SK-N-SH (cell line): ENCODE measurements at regions of chr2 and their contacts with region 1.

Region 1: GRCh38 chr2:102240640-102241370 is 54.0 kb downstream of the IL1RL2 start:
- DNase-seq: peak; percentile 78
- H3K4me3 ChIP-seq: peak overlapping the region in 1 of 2 experiments; percentile 40; a peak in 1 of 4 replicates
- H3K27ac ChIP-seq: peak overlapping the region in 1 of 2 experiments; percentile 78; a peak in 2 of 4 replicates
- H3K4me1 ChIP-seq: peaks cover 4 to 9% of the 10 kb centered on the region in 2 experiments; a peak in 2 of 4 replicates
- H3K27me3 ChIP-seq: no peaks in the 10 kb centered on the region
- CTCF ChIP-seq: peak; percentile 97
- EP300 ChIP-seq: no peak
- RAD21 ChIP-seq: peak; percentile 87

Region 2: GRCh38 chr2:102013206-102014040 is 227.4 kb before region 1 on chr2:
- CTCF ChIA-PET with region 1: interaction called, 41 read pairs
- POLR2A ChIA-PET with region 1: no interaction called
- DNase-seq: no peak
- H3K4me3 ChIP-seq: no peak overlapping the region
- H3K27ac ChIP-seq: no peak overlapping the region
- H3K4me1 ChIP-seq: no peaks in the 10 kb centered on the region
- H3K27me3 ChIP-seq: no peaks in the 10 kb centered on the region
- CTCF ChIP-seq: no peak
- EP300 ChIP-seq: no peak
- RAD21 ChIP-seq: no peak

Region 3: GRCh38 chr2:102033031-102033749 is 207.6 kb before region 1 on chr2:
- CTCF ChIA-PET with region 1: interaction called, 16 read pairs
- POLR2A ChIA-PET with region 1: no interaction called
- DNase-seq: no peak
- H3K4me3 ChIP-seq: no peak overlapping the region
- H3K27ac ChIP-seq: peak overlapping the region in 1 of 2 experiments; percentile 8; a peak in 1 of 4 replicates
- H3K4me1 ChIP-seq: peaks cover 0 to 12% of the 10 kb centered on the region in 2 experiments; a peak in 2 of 4 replicates
- H3K27me3 ChIP-seq: no peaks in the 10 kb centered on the region
- CTCF ChIP-seq: no peak
- EP300 ChIP-seq: no peak
- RAD21 ChIP-seq: no peak

Region 4: DNA sequence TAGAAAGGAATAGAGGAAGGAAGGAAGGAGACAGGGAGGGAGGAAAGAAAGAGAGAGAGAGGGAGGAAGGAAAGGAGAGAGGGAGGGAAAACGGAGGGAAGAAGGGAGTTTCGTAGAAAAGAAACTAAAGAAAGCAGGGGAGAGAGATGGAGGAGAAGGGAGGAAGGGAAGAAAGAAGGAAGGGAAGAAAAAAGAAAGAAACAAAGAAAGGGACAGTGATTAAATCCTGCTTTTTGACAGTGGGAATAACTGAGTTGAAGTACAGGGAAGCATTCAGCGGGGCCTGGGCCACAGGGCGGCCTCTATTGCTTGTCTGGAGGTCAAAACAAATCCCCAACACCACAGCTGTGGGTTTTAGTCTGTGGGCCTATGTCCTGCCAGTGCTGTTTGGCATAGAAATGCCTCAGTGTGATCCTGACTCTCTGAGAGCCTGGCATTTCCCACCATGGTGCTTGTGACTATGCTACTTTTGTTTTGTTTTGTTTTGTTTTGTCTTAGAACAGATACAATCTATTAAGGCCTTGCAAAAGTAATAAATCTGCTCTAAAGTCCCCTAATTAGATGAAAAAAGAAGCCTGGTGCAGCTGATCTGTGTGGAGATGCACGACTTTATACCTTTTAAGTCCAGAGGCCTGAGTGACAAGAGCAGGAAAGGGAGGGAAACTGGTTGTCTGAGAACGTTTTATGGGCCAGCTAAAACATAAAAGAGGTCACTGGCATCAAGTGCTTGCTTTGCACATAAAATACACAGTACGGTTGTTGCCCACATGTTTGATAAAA is 14.0 kb before region 1 on chr2:
- CTCF ChIA-PET with region 1: interaction called, 14 read pairs
- POLR2A ChIA-PET with region 1: no interaction called
- DNase-seq: no peak
- H3K4me3 ChIP-seq: no peak overlapping the region; a peak in 1 of 4 replicates
- H3K27ac ChIP-seq: peak overlapping the region; percentile 64 to 97; a peak in 3 of 4 replicates
- H3K4me1 ChIP-seq: peaks cover 7 to 13% of the 10 kb centered on the region in 2 experiments
- H3K27me3 ChIP-seq: no peaks in the 10 kb centered on the region
- CTCF ChIP-seq: no peak
- EP300 ChIP-seq: no peak
- RAD21 ChIP-seq: no peak

Region 5: DNA sequence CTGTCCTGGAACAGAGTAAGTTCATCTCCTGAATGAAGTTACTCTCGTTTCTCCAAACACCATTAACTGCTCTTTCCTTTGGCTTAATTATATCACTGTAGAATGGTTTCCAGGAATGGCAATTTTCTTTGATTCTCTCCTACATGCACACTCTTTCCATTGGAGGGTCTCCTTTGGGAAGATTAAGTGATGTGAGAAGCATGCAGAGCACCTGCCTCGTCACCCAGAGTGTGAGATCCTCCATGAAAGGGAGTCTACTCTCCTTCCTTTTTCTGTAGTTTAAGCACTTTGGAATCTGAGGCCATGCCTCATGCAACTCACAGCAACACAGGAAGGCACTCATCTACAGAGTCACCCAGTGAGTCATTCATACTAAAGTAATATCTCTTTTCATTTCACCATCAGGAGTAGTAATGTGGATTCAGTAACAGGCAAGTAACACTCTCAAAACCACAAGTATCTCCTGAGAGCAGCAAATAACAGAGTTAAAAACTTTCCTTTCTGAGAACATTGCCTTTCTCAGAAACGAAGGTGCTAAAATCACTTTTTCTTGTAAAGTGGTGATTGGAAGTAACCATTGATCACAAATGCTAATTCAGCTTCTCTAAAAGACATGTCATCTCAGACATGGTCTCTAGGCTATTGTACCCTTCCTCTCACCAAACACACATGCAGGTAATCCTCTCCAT is 17.7 kb after region 1 on chr2:
- CTCF ChIA-PET with region 1: interaction called, 23 read pairs
- POLR2A ChIA-PET with region 1: no interaction called
- DNase-seq: no peak
- H3K4me3 ChIP-seq: no peak overlapping the region
- H3K27ac ChIP-seq: peak overlapping the region in 1 of 2 experiments; percentile 24; a peak in 1 of 4 replicates
- H3K4me1 ChIP-seq: no peaks in the 10 kb centered on the region
- H3K27me3 ChIP-seq: peaks cover 14% of the 10 kb centered on the region
- CTCF ChIP-seq: no peak
- EP300 ChIP-seq: no peak
- RAD21 ChIP-seq: no peak

Region 6: GRCh38 chr2:102313025-102313424 is 72.2 kb after region 1 on chr2:
- CTCF ChIA-PET with region 1: no interaction called
- POLR2A ChIA-PET with region 1: no interaction called
- DNase-seq: no peak
- H3K4me3 ChIP-seq: no peak overlapping the region
- H3K27ac ChIP-seq: no peak overlapping the region
- H3K4me1 ChIP-seq: no peaks in the 10 kb centered on the region
- H3K27me3 ChIP-seq: peaks cover 16% of the 10 kb centered on the region
- CTCF ChIP-seq: no peak
- EP300 ChIP-seq: no peak
- RAD21 ChIP-seq: no peak

Region 7: DNA sequence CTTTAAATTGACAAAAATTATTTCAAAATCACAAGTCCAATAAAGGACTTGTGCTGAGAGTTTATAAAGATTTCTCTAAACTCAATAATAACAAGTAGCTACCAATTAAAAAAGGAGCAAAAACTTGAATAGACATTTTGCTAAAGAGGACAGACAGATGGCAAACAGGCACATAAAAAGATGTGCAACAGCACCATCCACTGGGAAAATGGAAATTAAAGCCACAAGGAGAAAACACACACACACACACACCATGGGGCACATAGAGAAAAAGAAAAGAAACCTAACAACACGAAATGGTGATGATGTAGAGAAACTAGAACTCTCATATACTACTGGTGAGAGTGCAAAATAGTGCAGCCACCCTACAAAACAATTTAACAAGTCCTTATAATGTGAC is 219.7 kb after region 1 on chr2:
- CTCF ChIA-PET with region 1: no interaction called
- POLR2A ChIA-PET with region 1: no interaction called
- DNase-seq: no peak
- H3K4me3 ChIP-seq: no peak overlapping the region
- H3K27ac ChIP-seq: no peak overlapping the region
- H3K4me1 ChIP-seq: no peaks in the 10 kb centered on the region
- H3K27me3 ChIP-seq: peaks cover 9% of the 10 kb centered on the region
- CTCF ChIP-seq: no peak
- EP300 ChIP-seq: no peak
- RAD21 ChIP-seq: no peak